Ovary (tissue), 10 donors: ENCODE measurements at regions of chr6 and their contacts with region 1.

Region 1: DNA sequence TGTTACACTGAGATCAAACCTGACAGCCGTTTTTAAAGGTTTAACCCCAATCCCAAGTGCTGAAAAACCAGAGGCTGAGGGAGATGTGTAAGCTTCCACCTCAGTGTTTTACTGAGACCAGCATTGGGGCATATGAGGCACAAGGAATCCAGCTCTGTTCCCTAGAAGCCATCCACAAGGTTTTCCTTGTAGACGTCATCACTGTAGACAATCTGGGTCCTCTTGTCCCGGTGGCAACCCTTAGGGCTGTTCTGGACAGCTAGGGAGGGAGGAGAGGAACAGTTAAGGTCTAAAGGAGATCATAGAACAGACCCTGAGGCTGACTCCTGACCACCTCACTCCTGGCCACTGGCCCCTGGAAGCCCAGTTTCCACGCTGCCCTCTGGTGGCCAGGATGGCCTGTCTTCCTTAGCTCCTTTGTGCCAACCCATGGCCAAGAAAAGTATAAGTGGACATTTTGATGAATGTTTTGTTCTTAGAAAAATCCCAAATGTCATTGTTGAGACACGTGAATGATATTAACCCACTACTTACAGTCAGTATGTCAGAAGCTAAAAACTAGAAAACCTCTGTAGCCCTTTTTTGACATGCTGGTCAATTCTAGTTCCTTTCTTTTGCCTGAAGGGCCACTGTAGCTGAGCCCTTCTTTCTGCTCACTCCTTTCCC is 6.4 kb downstream of the CFB start:
- DNase-seq: peak; percentile 56 to 79 (median 68)
- H3K4me3 ChIP-seq: no peak overlapping the region
- H3K27ac ChIP-seq: no peak overlapping the region
- H3K4me1 ChIP-seq: no peaks in the 10 kb centered on the region
- H3K27me3 ChIP-seq: no peaks in the 10 kb centered on the region
- CTCF ChIP-seq: peak in 2 of 3 donors; percentile 55 to 58
- EP300 ChIP-seq: no peak
- POLR2A ChIP-seq: no peak

Region 2: DNA sequence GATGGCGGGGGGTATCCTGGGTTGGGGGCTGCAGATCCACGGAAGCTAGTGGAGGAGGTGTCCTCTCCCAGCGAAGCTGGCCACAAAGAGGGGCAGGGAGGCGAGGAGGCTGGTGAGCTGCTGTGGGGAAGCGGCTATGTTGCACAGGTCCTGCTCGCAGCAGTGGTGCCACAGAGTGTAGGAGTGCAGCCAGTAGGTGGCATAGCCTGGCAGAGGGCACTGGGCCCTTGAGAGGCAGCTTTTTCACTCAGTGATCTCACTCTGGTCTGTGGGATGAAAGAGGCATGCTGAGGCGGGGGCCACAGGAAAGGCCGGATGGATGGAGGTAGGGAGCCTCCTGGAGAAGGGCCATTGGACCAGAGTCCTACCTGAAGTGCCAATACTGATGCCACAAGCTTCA is 240.0 kb before region 1 on chr6:
- intact Hi-C with region 1: no loop called
- DNase-seq: no peak
- H3K4me3 ChIP-seq: no peak overlapping the region
- H3K27ac ChIP-seq: no peak overlapping the region
- H3K4me1 ChIP-seq: no peaks in the 10 kb centered on the region
- H3K27me3 ChIP-seq: no peaks in the 10 kb centered on the region
- CTCF ChIP-seq: no peak
- EP300 ChIP-seq: no peak
- POLR2A ChIP-seq: no peak

Region 3: DNA sequence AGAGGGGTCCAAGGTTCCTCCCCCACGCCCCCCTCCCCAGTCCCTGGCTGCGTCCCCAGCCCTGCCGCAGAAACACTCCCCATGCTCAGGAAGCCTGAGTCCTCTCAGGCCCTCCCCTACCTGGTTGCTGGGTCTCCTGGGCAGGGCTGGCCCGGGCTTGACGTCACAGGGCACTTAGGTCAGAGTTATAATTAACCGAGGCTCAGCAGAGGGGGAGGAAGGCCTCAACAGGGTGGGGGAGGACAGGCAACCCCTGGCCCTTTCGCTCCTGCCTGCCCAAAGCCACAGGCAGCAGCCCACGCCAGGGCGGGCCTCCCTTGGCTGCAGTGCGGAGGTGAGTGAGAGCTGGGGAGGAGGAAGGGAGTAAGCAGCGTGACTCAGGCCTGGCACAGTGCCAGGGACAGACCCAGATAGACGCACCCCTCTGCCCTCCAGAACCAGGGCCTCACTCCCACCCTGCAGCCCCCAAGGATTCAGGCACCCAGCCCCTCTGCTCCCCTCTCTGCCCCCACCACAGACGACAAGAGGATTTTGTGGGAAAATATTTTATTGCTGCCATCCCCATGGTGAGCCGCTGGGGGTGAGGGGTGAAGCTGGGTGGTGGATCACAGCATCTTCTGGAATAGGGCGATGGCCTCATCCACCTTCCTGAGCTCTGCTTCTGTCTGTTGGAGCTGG is 175.1 kb before region 1 on chr6 and contains the start of gene VWA7:
- intact Hi-C with region 1: no loop called
- DNase-seq: peak; percentile 75 to 87 (median 84)
- H3K4me3 ChIP-seq: no peak within 1 kb of the TSS
- H3K27ac ChIP-seq: peak within 1 kb of the TSS; percentile 22 to 33
- H3K4me1 ChIP-seq: peaks cover 11% of the 10 kb centered on the region
- H3K27me3 ChIP-seq: no peaks in the 10 kb centered on the region
- CTCF ChIP-seq: no peak
- EP300 ChIP-seq: no peak
- POLR2A ChIP-seq: no peak
- total RNA-seq, gene VWA7: 0.48 to 25.2 (median 1.7) TPM

Region 4: GRCh38 chr6:31862344-31863227 is 89.7 kb before region 1 on chr6 and contains the start of gene NEU1:
- intact Hi-C with region 1: no loop called
- DNase-seq: peak; percentile 98 to 100 (median 99)
- H3K4me3 ChIP-seq: peak within 1 kb of the TSS; percentile 53
- H3K27ac ChIP-seq: peak within 1 kb of the TSS; percentile 65 to 70
- H3K4me1 ChIP-seq: peaks cover 4% of the 10 kb centered on the region
- H3K27me3 ChIP-seq: no peaks in the 10 kb centered on the region
- CTCF ChIP-seq: no peak
- EP300 ChIP-seq: peak; percentile 59
- POLR2A ChIP-seq: peak; percentile 97
- total RNA-seq, gene NEU1: 23.7 to 35.7 (median 28.2) TPM

Region 5: GRCh38 chr6:31908791-31909190 is 43.5 kb before region 1 on chr6:
- intact Hi-C with region 1: loop called in 3 of 4 experiments (anchors 5 to 10 kb)
- DNase-seq: no peak
- H3K4me3 ChIP-seq: no peak overlapping the region
- H3K27ac ChIP-seq: no peak overlapping the region
- H3K4me1 ChIP-seq: peaks cover 3% of the 10 kb centered on the region
- H3K27me3 ChIP-seq: no peaks in the 10 kb centered on the region
- CTCF ChIP-seq: no peak
- EP300 ChIP-seq: no peak
- POLR2A ChIP-seq: no peak

Region 6: GRCh38 chr6:32224696-32225095 is 272.4 kb after region 1 on chr6:
- intact Hi-C with region 1: no loop called
- DNase-seq: no peak
- H3K4me3 ChIP-seq: no peak overlapping the region
- H3K27ac ChIP-seq: no peak overlapping the region
- H3K4me1 ChIP-seq: no peaks in the 10 kb centered on the region
- H3K27me3 ChIP-seq: no peaks in the 10 kb centered on the region
- CTCF ChIP-seq: no peak
- EP300 ChIP-seq: no peak
- POLR2A ChIP-seq: no peak